ENCODE measurements at regions of chr11 and their contacts with region 1.

Region 1: GRCh38 chr11:46006418-46007070 is 84.1 kb downstream of the LARGE2 start:
- DNase-seq: peak; percentile 79
- H3K4me3 ChIP-seq: no peak overlapping the region
- H3K27ac ChIP-seq: no peak overlapping the region
- H3K4me1 ChIP-seq: no peaks in the 10 kb centered on the region
- H3K27me3 ChIP-seq: no peaks in the 10 kb centered on the region
- CTCF ChIP-seq: peak; percentile 39 to 55
- POLR2A ChIP-seq: no peak

Region 2: GRCh38 chr11:45846974-45847910 is 159.3 kb before region 1 on chr11 and contains the start of gene CRY2:
- CTCF ChIA-PET with region 1: interaction called, 12 read pairs
- POLR2A ChIA-PET with region 1: no interaction called
- dilution Hi-C with region 1: no loop called
- intact Hi-C with region 1: loop called (anchors 1 kb)
- DNase-seq: peak; percentile 98
- H3K4me3 ChIP-seq: peak within 1 kb of the TSS; percentile 39 to 81 (median 68)
- H3K27ac ChIP-seq: peak within 1 kb of the TSS; percentile 63
- H3K4me1 ChIP-seq: peaks cover 13% of the 10 kb centered on the region
- H3K27me3 ChIP-seq: peaks cover 7 to 12% of the 10 kb centered on the region in 2 experiments
- CTCF ChIP-seq: no peak
- POLR2A ChIP-seq: peak; percentile 81
- total RNA-seq, gene CRY2: 8.8 and 11.7 TPM in 2 replicates

Region 3: GRCh38 chr11:45872513-45873356 is 133.8 kb before region 1 on chr11:
- CTCF ChIA-PET with region 1: interaction called, 39 read pairs
- POLR2A ChIA-PET with region 1: no interaction called
- dilution Hi-C with region 1: no loop called
- intact Hi-C with region 1: loop called (anchors 2 kb)
- DNase-seq: peak; percentile 57
- H3K4me3 ChIP-seq: no peak overlapping the region
- H3K27ac ChIP-seq: no peak overlapping the region
- H3K4me1 ChIP-seq: no peaks in the 10 kb centered on the region
- H3K27me3 ChIP-seq: no peaks in the 10 kb centered on the region
- CTCF ChIP-seq: peak; percentile 70 to 84
- POLR2A ChIP-seq: no peak

Region 4: GRCh38 chr11:45982656-45983470 is 23.7 kb before region 1 on chr11:
- CTCF ChIA-PET with region 1: interaction called, 10 read pairs
- POLR2A ChIA-PET with region 1: interaction called, 11 read pairs
- dilution Hi-C with region 1: no loop called
- intact Hi-C with region 1: no loop called
- DNase-seq: peak; percentile 70
- H3K4me3 ChIP-seq: no peak overlapping the region
- H3K27ac ChIP-seq: no peak overlapping the region
- H3K4me1 ChIP-seq: peaks cover 4% of the 10 kb centered on the region
- H3K27me3 ChIP-seq: no peaks in the 10 kb centered on the region
- CTCF ChIP-seq: no peak
- POLR2A ChIP-seq: no peak

Region 5: DNA sequence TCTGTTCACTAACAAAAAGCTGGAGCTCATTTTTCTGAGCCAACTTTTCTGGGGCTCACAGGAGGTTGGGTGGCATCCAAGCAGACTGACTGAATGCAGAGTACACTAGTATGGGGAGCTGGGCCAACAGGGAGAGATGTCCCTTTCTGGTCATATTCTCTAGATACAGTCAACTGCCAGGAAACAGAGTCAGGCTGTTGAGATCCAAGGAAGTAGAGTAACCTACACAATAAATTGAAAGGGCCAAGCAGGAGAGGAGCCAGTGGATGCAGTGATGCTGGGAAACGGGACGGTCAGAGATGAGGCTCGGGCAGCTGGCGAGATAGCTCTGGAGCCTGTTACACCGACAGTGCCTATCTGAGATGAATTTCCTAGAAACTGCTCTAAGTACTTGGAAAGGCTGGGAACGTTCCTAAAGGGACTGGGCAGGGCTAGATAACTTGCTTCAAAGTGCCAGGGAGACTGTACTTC is 13.0 kb before region 1 on chr11:
- CTCF ChIA-PET with region 1: interaction called, 23 read pairs
- POLR2A ChIA-PET with region 1: no interaction called
- dilution Hi-C with region 1: no loop called
- intact Hi-C with region 1: no loop called
- DNase-seq: no peak
- H3K4me3 ChIP-seq: no peak overlapping the region
- H3K27ac ChIP-seq: no peak overlapping the region
- H3K4me1 ChIP-seq: no peaks in the 10 kb centered on the region
- H3K27me3 ChIP-seq: no peaks in the 10 kb centered on the region
- CTCF ChIP-seq: no peak
- POLR2A ChIP-seq: no peak

Region 6: GRCh38 chr11:46017341-46017740 is 10.8 kb after region 1 on chr11:
- CTCF ChIA-PET with region 1: interaction called, 28 read pairs
- POLR2A ChIA-PET with region 1: no interaction called
- dilution Hi-C with region 1: no loop called
- intact Hi-C with region 1: no loop called
- DNase-seq: no peak
- H3K4me3 ChIP-seq: no peak overlapping the region
- H3K27ac ChIP-seq: no peak overlapping the region
- H3K4me1 ChIP-seq: no peaks in the 10 kb centered on the region
- H3K27me3 ChIP-seq: no peaks in the 10 kb centered on the region
- CTCF ChIP-seq: no peak
- POLR2A ChIP-seq: no peak

Region 7: GRCh38 chr11:46026606-46027293 is 20.2 kb after region 1 on chr11:
- CTCF ChIA-PET with region 1: interaction called, 23 read pairs
- POLR2A ChIA-PET with region 1: no interaction called
- dilution Hi-C with region 1: no loop called
- intact Hi-C with region 1: no loop called
- DNase-seq: no peak
- H3K4me3 ChIP-seq: no peak overlapping the region
- H3K27ac ChIP-seq: no peak overlapping the region
- H3K4me1 ChIP-seq: peaks cover 5% of the 10 kb centered on the region
- H3K27me3 ChIP-seq: no peaks in the 10 kb centered on the region
- CTCF ChIP-seq: no peak
- POLR2A ChIP-seq: no peak

Measured in endothelial cell of umbilical vein (primary cell).